ENCODE measurements at regions of chr2 and their contacts with region 1.

Region 1: GRCh38 chr2:209525834-209526281 is 102.0 kb downstream of the MAP2 start:
- DNase-seq: no peak
- H3K4me3 ChIP-seq: peak overlapping the region; percentile 31 to 47
- H3K27ac ChIP-seq: peak overlapping the region; percentile 82 to 84
- H3K4me1 ChIP-seq: peaks cover 0 to 32% of the 10 kb centered on the region in 2 donors
- H3K27me3 ChIP-seq: no peaks in the 10 kb centered on the region
- CTCF ChIP-seq: no peak

Region 2: DNA sequence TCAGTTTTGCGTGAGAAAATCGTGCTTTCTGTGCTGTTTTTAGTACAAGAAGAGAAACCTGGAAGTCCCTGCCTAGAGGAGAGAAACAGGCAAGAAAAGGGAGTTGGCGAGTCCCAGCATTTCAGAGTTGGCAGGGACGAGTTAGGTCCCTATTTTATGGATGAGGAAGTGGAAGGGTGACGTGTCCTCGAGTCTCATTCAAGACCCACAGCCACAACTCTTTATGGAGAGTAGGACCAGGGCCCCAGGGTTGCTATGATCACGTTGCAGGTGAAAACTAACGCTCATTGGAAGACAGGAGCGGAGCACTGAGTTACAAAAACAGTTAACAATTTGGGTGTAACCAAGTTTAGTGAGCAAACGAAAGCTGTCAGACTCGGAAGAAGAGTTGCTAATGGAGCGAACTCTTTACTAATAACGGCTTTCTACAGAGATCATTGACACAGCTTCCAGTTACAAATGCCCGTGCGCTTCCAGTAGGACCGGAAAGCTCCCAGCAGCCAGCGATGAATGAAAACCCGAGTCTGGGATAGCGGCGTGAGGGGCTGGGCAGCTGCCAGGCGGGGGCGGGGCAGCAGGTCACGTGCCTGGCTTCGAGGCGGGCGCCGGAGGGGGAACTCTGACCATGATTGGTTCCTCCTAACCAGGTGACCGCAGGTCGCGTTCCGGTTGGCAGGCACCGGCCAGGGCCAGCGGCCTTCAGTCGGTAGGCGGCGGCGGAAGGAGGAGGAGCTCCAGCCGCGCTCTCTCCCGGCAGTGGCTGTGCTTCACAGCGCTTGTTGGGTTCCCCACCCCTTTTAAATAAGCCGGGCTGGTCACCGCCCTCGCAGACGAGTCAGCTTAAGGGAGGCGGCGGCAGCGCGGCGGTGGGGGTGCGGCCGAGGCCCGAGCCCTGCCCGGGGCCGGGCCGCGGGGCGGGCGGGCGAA is 1814.8 kb before region 1 on chr2 and contains the start of gene CCNYL1:
- intact Hi-C with region 1: loop called (anchors 5 kb)
- DNase-seq: peak; percentile 95 to 99
- H3K4me3 ChIP-seq: peak within 1 kb of the TSS; percentile 75 to 92
- H3K27ac ChIP-seq: peak within 1 kb of the TSS; percentile 88 to 90
- H3K4me1 ChIP-seq: peaks cover 0 to 6% of the 10 kb centered on the region in 2 donors
- H3K27me3 ChIP-seq: no peaks in the 10 kb centered on the region
- CTCF ChIP-seq: peak; percentile 17 to 55 (median 17)
- total RNA-seq, gene CCNYL1: 12.3 TPM

Region 3: DNA sequence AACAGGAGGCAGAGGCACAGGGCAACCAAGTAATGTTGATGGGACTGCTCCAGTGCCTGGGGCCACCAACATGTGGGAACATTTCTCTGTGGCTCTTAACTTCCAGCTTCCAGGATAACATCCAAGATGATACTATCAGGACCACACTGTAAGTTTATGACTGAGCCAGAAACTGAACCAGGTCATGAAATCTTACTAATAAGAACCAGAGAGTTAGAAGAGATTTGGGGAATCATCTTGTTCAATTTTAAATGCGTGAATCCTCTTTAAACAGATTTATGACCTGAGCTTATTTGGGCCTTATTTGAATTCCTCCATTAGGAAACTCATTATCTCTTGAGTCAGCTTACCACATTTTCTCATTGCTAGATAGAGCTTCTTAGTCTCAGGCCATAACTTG is 57.0 kb before region 1 on chr2:
- intact Hi-C with region 1: loop called (anchors 2 kb)
- DNase-seq: no peak
- H3K4me3 ChIP-seq: no peak overlapping the region
- H3K27ac ChIP-seq: no peak overlapping the region
- H3K4me1 ChIP-seq: peaks cover 4 to 15% of the 10 kb centered on the region in 2 donors
- H3K27me3 ChIP-seq: no peaks in the 10 kb centered on the region
- CTCF ChIP-seq: no peak

Region 4: DNA sequence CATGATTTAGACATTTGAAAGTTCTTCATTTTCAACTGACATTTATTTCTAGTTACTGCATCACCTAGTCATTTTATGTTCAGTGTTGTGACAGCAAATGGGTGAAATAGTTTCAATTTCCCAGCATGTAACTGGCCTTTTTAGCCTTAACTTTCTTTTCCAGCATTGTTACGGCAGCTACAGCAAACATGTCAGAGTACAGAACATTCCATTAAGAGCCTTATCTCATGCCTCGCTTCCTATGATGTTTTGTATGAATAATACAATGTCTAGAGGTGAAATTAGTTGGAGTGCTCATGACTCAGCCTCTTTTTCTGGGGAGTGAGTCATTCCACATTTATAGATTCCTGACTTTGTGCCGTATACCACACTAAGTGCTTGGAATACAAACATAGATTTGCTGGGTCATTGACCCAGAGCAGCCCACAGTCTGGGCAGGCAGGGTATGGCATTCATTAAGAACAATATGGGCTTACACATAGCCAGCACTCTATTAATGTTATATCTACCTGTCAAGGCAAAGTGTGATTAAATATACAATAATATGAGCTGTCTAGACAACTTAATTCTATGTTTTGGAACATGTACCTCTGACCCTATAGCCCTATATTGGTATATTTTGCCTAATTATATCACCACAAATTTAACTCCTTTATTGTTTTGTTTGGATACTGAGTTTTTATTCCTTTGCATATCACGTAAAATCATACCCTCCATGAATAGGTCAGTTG is 29.8 kb before region 1 on chr2:
- intact Hi-C with region 1: loop called (anchors 1 kb)
- DNase-seq: peak; percentile 17 to 80
- H3K4me3 ChIP-seq: peak overlapping the region; percentile 6 to 33
- H3K27ac ChIP-seq: peak overlapping the region; percentile 85 to 89
- H3K4me1 ChIP-seq: peaks cover 0 to 6% of the 10 kb centered on the region in 2 donors
- H3K27me3 ChIP-seq: no peaks in the 10 kb centered on the region
- CTCF ChIP-seq: no peak

Region 5: DNA sequence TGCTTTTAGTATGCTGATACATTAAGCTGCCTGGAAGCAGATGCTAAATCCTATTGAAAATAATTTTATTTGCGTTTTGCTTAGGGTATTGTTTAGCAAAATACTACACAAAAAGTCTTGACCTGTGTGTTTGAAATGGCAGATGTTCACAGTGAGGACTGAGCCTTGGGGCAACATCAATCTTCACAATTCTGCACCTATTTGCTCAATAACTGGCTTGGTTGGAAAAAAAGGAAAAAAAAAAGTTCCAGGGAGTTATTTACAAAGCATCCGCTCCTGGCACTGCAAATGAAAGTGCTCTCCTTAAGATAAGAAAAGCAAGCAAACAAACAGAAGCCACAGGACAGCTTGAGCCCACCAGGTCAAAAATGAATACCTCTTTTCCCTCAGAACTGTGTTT is 24.3 kb before region 1 on chr2:
- intact Hi-C with region 1: loop called (anchors 1 kb)
- DNase-seq: no peak
- H3K4me3 ChIP-seq: no peak overlapping the region
- H3K27ac ChIP-seq: no peak overlapping the region
- H3K4me1 ChIP-seq: peaks cover 0 to 5% of the 10 kb centered on the region in 2 donors
- H3K27me3 ChIP-seq: no peaks in the 10 kb centered on the region
- CTCF ChIP-seq: no peak

Region 6: GRCh38 chr2:210171309-210172203 is 645.7 kb after region 1 on chr2 and contains the start of gene KANSL1L:
- intact Hi-C with region 1: loop called (anchors 10 kb)
- DNase-seq: peak; percentile 94 to 99
- H3K4me3 ChIP-seq: peak within 1 kb of the TSS; percentile 79 to 99
- H3K27ac ChIP-seq: peak within 1 kb of the TSS; percentile 98 to 100
- H3K4me1 ChIP-seq: peaks cover 6 to 19% of the 10 kb centered on the region in 2 donors
- H3K27me3 ChIP-seq: no peaks in the 10 kb centered on the region
- CTCF ChIP-seq: no peak
- total RNA-seq, gene KANSL1L: 39.6 TPM

Region 7: DNA sequence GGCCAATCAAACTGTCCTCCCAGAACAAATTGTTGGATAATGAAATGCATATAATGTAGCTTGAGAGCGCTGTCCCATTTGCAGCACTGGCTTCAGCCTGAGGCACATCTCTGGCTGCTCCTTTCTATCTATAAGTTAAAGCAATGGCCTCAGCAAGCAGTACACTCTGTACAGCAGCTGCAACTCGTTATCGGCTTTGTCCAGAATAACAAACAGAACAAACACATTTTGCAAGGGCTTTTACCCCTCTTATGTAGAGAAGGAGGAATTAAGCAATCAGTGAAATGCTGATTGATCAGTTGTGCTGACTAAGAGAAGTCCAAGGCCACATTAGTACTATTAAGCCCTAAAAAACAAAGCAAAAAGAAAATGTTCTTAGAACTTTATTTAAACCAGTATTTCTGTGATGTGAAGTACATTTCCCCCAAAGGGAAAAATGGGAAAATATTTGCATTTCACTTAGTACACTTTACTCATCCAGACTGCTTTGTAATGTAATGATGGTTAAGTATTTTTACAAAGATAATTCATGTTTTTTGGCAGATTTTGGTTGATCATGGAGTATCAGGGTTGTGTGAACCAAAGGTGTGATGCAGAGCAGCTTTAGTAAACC is 1015.5 kb after region 1 on chr2:
- intact Hi-C with region 1: no loop called
- DNase-seq: no peak
- H3K4me3 ChIP-seq: no peak overlapping the region
- H3K27ac ChIP-seq: no peak overlapping the region
- H3K4me1 ChIP-seq: no peaks in the 10 kb centered on the region
- H3K27me3 ChIP-seq: no peaks in the 10 kb centered on the region
- CTCF ChIP-seq: no peak